Activated B cell treated with CpG ODN at 0.5 μM for 24 hours (primary cell): ENCODE measurements at regions of chr6 and their contacts with region 1.

Region 1: GRCh38 chr6:26025894-26026832 is 61.1 kb upstream of the HFE start:
- DNase-seq: peak; percentile 76
- ATAC-seq: peak; percentile 39
- H3K4me3 Mint-ChIP-seq: peak overlapping the region; percentile 96
- H3K27ac Mint-ChIP-seq: peak overlapping the region; percentile 99
- H3K4me1 Mint-ChIP-seq: peaks cover 35% of the 10 kb centered on the region
- H3K27me3 Mint-ChIP-seq: peaks cover 2% of the 10 kb centered on the region
- CTCF ChIP-seq: no peak

Region 2: DNA sequence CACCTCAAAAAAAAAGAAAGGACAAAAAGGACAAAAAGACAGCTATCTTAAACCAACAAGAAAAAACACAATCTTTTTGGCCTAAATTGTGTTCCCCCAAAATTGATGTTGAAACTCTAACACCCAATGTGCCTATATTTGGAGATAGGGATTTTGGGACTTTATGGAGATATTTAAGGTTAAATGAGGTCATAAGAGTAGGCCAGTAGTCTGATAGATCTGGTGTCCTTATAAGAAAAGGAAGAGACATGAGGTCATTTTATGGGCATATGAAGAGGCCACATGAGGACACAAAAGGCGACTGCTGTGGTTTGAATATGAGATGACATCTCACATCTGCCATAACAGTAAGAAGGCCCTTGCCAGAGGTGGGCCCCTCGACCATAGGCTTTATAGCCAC is 14.1 kb before region 1 on chr6:
- CTCF ChIA-PET with region 1: no interaction called
- POLR2A ChIA-PET with region 1: interaction called, 20 read pairs
- intact Hi-C with region 1: no loop called
- DNase-seq: no peak
- ATAC-seq: no peak
- H3K4me3 Mint-ChIP-seq: no peak overlapping the region
- H3K27ac Mint-ChIP-seq: no peak overlapping the region
- H3K4me1 Mint-ChIP-seq: no peaks in the 10 kb centered on the region
- H3K27me3 Mint-ChIP-seq: no peaks in the 10 kb centered on the region
- CTCF ChIP-seq: no peak

Region 3: GRCh38 chr6:26097268-26097875 is 71.2 kb after region 1 on chr6:
- CTCF ChIA-PET with region 1: interaction called, 15 read pairs
- POLR2A ChIA-PET with region 1: interaction called, 43 read pairs
- intact Hi-C with region 1: loop called (anchors 1 kb)
- DNase-seq: no peak
- ATAC-seq: peak; percentile 81
- H3K4me3 Mint-ChIP-seq: no peak overlapping the region
- H3K27ac Mint-ChIP-seq: no peak overlapping the region
- H3K4me1 Mint-ChIP-seq: peaks cover 16% of the 10 kb centered on the region
- H3K27me3 Mint-ChIP-seq: no peaks in the 10 kb centered on the region
- CTCF ChIP-seq: no peak

Region 4: GRCh38 chr6:26234421-26235296 is 208.5 kb after region 1 on chr6:
- CTCF ChIA-PET with region 1: no interaction called
- POLR2A ChIA-PET with region 1: interaction called, 23 read pairs
- intact Hi-C with region 1: no loop called
- DNase-seq: peak; percentile 49
- ATAC-seq: peak; percentile 77
- H3K4me3 Mint-ChIP-seq: peak overlapping the region; percentile 89
- H3K27ac Mint-ChIP-seq: peak overlapping the region; percentile 97
- H3K4me1 Mint-ChIP-seq: peaks cover 26% of the 10 kb centered on the region
- H3K27me3 Mint-ChIP-seq: no peaks in the 10 kb centered on the region
- CTCF ChIP-seq: no peak

Region 5: DNA sequence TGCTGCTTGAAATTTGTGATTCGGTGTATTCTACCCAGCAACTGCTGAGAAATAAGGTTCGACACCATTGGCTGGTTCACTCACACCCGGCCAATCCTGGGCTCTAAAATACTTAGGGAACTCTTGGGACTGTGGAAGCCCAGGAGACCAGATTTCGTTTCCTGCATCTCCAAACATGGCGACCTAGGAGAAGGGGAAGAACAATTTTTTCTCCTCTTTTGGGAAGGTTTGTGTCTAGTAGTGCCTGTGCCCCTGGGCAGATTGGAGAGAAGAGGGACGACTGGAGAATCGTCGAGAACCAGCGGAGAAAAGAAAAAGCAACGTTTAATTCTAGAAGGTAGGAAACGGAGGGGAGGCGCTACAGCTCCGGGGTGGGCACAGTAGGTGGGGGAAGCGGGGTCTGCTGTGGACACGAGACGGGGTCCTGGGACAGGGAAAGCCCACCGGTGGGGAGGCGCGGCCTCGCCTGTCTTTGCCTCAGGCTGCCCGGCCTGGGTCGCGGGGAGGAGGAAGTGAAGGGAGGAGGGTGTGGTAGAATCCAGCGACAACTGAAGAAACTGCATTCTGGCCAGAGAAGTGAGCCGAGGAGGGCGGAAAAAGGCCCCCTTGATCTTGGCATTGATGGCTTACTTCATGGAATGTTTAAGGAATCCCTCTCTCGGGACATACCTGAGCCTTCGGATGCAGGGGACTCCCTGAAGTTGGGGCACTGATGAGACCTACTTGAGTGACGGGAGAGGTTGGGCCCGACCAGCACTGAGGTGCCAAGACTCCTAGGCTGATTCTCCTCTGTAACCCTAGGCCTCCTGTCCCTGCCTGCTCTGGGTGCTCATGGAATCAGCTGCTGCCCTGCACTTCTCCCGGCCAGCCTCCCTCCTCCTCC is 431.9 kb after region 1 on chr6 and contains the start of gene BTN2A1:
- CTCF ChIA-PET with region 1: no interaction called
- POLR2A ChIA-PET with region 1: no interaction called
- intact Hi-C with region 1: no loop called
- DNase-seq: peak; percentile 49
- ATAC-seq: peak; percentile 98
- H3K4me3 Mint-ChIP-seq: peak within 1 kb of the TSS; percentile 98
- H3K27ac Mint-ChIP-seq: peak within 1 kb of the TSS; percentile 96
- H3K4me1 Mint-ChIP-seq: peaks cover 70% of the 10 kb centered on the region
- H3K27me3 Mint-ChIP-seq: no peaks in the 10 kb centered on the region
- CTCF ChIP-seq: no peak
- total RNA-seq, gene BTN2A1: 39.7 and 45.1 TPM in 2 replicates

Region 6: GRCh38 chr6:27146706-27147505 is 1120.7 kb after region 1 on chr6:
- CTCF ChIA-PET with region 1: interaction called, 3 read pairs
- POLR2A ChIA-PET with region 1: interaction called, 41 read pairs
- intact Hi-C with region 1: no loop called
- DNase-seq: peak; percentile 70
- ATAC-seq: peak; percentile 80
- H3K4me3 Mint-ChIP-seq: no peak overlapping the region
- H3K27ac Mint-ChIP-seq: no peak overlapping the region
- H3K4me1 Mint-ChIP-seq: peaks cover 26% of the 10 kb centered on the region
- H3K27me3 Mint-ChIP-seq: no peaks in the 10 kb centered on the region
- CTCF ChIP-seq: no peak

Region 7: GRCh38 chr6:27871924-27872638 is 1845.9 kb after region 1 on chr6:
- CTCF ChIA-PET with region 1: no interaction called
- POLR2A ChIA-PET with region 1: interaction called, 38 read pairs
- intact Hi-C with region 1: loop called (anchors 2 kb)
- DNase-seq: peak; percentile 73
- ATAC-seq: peak; percentile 80
- H3K4me3 Mint-ChIP-seq: peak overlapping the region; percentile 94
- H3K27ac Mint-ChIP-seq: peak overlapping the region; percentile 95
- H3K4me1 Mint-ChIP-seq: peaks cover 36% of the 10 kb centered on the region
- H3K27me3 Mint-ChIP-seq: no peaks in the 10 kb centered on the region
- CTCF ChIP-seq: no peak